ENCODE measurements at regions of chr10 and their contacts with region 1.

Region 1: DNA sequence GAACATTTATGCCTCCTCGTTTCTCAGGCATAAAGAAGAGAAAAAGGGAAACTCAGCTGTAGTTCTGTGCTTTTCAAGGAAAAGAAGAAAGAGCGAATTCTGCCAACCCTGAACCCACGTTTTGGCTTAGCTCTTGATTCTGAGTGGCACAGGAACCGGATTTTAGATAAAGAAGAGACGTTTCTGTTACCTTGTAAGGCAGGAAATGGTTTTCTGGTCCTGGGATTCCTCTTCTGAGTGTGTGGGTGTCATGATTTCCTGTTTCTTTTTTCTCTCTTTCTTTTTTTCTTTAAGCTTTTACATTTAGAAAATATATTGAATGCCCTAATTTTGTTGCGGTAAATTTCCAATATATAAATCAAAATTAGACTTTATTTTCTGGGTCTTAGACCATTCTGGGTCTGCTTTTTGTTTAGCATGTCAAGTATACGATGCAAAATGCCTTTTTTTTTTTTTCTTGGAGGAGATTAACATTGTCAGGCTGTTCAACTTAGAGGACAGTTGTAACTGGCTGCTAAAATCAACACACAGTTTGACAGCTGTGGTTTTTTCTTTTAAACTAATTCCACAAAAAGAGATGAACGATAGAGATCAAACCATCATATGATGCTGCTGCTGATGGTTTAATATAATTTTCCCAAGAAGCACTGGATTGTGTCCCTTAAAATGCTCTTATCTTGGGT is 190.8 kb downstream of the GATA3 start:
- DNase-seq: no peak
- H3K4me3 Mint-ChIP-seq: peak overlapping the region; percentile 58
- H3K27ac Mint-ChIP-seq: peak overlapping the region; percentile 93
- H3K4me1 Mint-ChIP-seq: peaks cover 76% of the 10 kb centered on the region
- H3K27me3 Mint-ChIP-seq: no peaks in the 10 kb centered on the region

Region 2: GRCh38 chr10:6973899-6974298 is 1271.4 kb before region 1 on chr10:
- intact Hi-C with region 1: no loop called
- DNase-seq: peak; percentile 24
- H3K4me3 Mint-ChIP-seq: no peak overlapping the region
- H3K27ac Mint-ChIP-seq: no peak overlapping the region
- H3K4me1 Mint-ChIP-seq: peaks cover 19% of the 10 kb centered on the region
- H3K27me3 Mint-ChIP-seq: peaks cover 25% of the 10 kb centered on the region

Region 3: DNA sequence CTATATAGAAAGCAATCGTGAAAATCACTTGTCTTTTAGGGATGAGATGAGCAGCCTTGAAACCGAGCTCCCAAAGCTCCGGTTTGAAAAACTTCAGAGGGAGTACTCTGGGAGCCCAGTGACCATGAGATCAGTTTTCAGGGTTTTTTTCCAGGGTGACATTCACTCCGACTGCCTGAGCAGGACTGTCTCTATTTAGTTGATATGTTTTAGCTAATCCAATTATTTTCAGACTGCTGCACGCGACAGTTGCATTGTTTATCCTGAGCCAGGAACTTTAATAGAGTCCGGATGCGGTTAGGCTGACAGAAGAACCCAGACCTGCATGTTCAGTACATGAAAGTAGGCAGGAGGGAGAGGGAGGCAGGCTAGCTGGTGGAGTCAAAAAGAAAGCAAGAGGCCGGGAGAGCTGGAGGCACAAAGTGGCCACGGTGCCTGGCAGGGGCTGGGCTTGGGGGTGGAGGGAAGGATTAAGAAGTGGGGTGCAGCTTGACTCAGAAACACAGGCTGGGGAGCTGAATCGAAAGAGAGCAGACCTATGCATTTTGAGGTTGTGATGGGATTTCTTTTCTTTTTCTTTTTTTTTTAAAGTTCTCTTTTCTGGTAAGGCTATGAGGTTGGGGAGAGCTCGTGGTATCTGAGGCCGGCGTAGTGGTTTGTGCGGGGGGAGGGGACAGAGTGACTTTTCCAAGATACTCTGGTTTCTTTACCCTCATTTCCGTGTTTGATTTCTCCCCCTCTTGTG is 185.1 kb before region 1 on chr10:
- intact Hi-C with region 1: loop called (anchors 2 kb)
- DNase-seq: peak; percentile 81
- H3K4me3 Mint-ChIP-seq: peak overlapping the region; percentile 92
- H3K27ac Mint-ChIP-seq: peak overlapping the region; percentile 94
- H3K4me1 Mint-ChIP-seq: peaks cover 50% of the 10 kb centered on the region
- H3K27me3 Mint-ChIP-seq: no peaks in the 10 kb centered on the region

Region 4: DNA sequence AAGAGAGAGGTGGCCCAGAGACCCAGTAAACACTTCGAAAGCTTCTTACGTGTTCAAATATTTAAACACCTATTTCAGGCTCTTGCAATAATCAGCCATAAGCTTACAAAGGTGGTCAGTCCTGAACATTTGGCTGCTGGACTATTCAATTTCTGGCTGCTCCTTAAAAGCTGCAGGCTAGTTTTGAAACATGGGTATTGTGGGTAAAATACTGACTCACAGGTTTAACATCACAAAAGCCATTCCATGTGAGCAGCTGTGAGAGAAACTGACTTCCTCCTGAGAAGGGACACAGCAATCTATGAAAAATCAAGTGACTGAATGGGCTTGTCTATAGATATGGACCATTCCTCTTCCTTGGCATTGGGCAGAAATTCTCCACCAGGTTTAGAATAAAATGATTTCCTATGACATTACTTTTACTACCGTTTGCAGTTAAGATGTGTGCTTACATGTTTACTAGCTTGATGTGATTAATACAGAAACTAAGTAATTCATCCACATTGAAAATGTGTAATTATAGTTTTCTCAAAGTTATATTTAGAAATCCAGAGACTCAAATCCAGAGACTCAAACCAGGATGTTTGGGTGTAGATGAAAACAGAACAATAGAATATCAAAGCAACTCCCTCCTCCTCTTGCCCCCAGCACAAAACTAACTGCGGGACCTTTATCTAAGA is 61.6 kb after region 1 on chr10:
- intact Hi-C with region 1: loop called (anchors 1 kb)
- DNase-seq: no peak
- H3K4me3 Mint-ChIP-seq: no peak overlapping the region
- H3K27ac Mint-ChIP-seq: peak overlapping the region; percentile 73
- H3K4me1 Mint-ChIP-seq: peaks cover 41% of the 10 kb centered on the region
- H3K27me3 Mint-ChIP-seq: no peaks in the 10 kb centered on the region

Region 5: GRCh38 chr10:8577686-8578085 is 332.4 kb after region 1 on chr10:
- intact Hi-C with region 1: loop called (anchors 5 kb)
- DNase-seq: no peak
- H3K4me3 Mint-ChIP-seq: no peak overlapping the region
- H3K27ac Mint-ChIP-seq: peak overlapping the region; percentile 89
- H3K4me1 Mint-ChIP-seq: peaks cover 69% of the 10 kb centered on the region
- H3K27me3 Mint-ChIP-seq: no peaks in the 10 kb centered on the region

Region 6: GRCh38 chr10:9294865-9295264 is 1049.6 kb after region 1 on chr10:
- intact Hi-C with region 1: loop called (anchors 10 kb)
- DNase-seq: no peak
- H3K4me3 Mint-ChIP-seq: no peak overlapping the region
- H3K27ac Mint-ChIP-seq: peak overlapping the region; percentile 71
- H3K4me1 Mint-ChIP-seq: peaks cover 27% of the 10 kb centered on the region
- H3K27me3 Mint-ChIP-seq: peaks cover 2% of the 10 kb centered on the region